ENCODE measurements at regions of chr16 and their contacts with region 1.

Region 1: DNA sequence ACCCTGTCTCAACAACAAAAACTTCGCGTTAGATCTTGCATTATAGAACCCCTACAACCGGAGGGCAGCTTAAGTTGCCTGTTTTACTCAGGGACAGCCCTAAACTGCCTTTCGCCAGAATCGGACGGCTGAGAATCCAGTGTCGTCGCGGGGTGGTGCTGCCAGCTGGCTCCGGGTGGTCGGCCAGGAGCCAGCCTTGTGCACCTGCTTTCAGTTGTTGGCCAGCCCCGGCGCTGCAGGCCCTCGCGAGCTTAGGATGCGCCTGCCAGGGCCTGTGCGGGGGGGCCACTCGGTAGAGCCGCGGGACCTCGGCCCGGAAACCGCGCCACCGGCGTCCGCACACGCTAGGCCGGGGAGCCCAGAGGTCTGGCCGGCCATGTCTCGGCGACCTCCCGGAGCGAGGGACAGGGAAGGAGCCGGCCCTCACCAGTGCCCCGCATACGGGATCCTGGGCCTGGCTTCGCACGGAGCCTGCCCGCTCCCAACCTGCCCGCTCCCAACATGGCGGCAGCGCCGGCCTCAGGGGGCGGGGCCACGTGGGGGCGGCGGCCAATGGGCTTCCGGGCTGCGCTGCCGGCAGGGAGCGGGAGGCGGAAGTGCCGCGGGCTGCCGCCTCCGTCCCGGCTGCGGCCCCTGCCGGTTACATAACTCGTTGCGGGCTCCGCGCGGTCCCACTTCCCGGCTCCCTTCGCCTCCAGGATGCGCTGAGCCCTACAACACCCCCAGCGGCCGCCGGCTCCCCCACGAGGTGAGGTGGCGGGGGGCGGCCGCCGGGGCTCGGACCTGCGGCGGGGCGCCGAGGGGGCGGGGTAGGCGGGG is 14.2 kb downstream of the NAA60 start:
- DNase-seq: peak; percentile 77 to 95 (median 90)

Region 2: DNA sequence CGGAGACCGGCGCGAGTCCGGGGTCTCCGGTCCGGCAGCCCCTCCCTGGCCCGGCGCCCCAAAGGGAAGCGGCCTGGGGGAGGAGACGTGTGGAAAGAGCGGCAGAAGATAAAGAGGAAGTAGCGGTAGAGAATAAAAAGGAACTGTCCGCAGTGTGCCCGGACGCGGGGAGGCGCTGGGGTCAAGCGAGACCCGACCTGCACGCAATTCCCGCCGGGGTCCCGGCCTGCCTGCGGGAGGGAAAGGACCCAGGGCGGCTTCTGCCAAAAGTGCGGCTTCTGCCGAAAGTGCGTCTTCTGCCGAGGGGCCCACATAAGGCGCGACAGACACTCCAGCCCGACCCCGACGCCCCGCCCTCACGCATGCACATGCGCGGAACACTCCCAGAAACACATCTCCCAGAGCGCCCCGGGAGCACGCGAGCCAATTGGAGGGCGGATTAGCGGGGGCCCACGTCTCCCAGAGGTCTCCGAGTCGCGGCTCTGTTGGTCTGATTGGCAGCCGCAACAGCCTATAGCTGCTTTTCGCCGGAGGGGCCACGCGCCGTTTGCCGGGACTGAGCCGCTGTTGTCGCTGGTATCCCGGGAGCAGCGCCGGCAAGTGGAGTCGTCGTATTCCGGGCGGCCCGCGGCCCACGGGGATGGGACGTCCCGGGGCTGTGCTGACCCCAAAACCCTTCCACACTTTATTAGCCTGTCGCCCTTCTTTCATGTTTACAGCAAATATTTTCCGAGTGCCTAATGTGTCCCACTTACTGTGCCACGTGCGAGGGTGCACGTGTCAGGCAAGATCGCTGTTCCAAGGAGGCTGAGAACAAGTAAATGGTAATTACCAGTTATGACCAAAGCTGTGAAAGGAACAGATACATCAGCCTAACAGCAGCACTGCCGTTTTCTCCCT is 193.3 kb before region 1 on chr16:
- intact Hi-C with region 1: loop called (anchors 10 kb)
- DNase-seq: peak; percentile 98 to 100 (median 99)

Region 3: GRCh38 chr16:3305109-3306068 is 152.3 kb before region 1 on chr16 and contains the starts of genes TIGD7 and ZNF75A:
- intact Hi-C with region 1: loop called (anchors 10 kb)
- DNase-seq: peak; percentile 87 to 99 (median 95)

Region 4: GRCh38 chr16:3383045-3383448 is 74.6 kb before region 1 on chr16:
- intact Hi-C with region 1: no loop called
- DNase-seq: no peak

Region 5: DNA sequence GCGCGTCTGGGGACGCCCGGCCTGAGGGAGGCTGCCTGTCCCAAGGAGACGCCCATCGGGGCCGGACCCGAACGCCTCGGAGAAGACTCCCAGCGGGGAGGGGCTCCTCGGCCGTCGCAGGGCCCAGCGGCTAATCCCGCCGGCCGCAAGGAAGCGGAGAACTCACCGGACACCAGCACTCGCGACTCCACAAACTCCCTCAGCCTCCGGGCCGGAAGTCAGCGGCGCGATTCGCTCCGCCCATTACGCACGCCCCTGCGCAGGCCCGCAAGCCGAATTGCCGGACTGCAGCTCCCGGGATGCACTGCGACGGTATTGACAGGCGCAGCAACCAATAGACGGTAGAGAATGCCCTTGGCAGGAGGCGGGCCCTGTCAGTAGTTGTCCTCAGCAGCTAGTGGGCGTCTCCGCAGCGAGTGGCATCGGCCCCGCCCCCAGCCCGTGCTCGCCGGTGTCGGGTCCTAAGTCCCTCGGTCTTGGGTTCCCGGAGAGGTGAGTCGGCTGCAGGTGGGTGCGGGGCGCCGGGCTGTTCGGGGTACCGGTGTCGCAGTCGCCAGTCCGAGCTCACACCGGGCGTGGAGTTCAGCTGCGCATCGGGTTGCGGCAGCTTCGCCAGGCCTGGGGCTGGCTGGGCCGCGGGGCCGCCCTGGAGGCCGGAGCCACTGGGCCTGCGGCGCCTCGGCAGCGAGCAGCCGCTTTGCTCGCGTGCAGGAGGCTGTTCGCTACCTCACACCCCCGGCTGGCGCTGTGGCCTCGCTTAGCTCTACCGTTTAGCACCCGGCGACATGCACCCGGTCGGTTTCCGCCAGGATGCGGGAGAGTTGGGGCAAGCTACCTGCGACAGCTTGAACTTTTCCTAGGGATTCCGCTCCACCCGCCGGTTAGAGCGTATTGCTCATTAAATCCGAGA is 56.6 kb before region 1 on chr16 and contains the starts of genes ZNF174 and ZSCAN32:
- intact Hi-C with region 1: loop called (anchors 2 kb)
- DNase-seq: peak; percentile 97 to 100 (median 99)

Region 6: DNA sequence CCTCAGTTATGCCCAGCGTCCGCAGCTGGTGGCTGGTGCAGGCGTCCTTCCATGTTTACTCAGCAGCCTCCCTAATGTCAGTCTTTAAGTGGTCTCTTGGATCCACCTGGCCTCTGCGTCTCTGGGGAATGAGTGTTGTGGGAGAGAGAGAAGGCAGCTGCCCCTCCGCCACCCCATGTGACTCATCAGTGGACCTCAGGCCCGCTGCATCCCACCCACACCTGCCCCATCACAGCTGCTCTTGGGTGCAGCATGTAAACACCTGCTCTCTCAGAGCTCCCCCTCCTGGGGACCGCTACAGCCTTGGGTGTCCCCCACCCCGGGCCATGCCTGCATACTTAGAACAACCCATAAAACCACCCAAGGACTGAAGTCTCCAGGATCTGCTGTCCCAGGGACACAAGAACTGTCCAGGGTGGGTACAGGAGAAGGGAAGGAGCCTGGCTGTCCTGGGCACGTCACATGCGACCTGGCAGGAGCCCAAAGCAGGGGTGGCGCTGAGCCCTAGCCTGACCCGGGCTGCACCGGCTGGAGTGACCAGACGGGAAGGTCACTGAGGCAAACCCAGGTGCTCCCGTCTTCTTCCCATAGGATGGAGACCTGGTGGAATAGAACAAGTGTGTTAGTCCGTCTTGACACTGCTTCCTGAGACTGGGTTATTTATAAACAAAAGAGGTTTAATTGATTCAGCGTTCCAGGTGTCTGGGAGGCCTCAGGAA is 33.4 kb after region 1 on chr16:
- intact Hi-C with region 1: no loop called
- DNase-seq: no peak

Region 7: GRCh38 chr16:3503523-3503922 is 45.9 kb after region 1 on chr16:
- intact Hi-C with region 1: loop called (anchors 5 kb)
- DNase-seq: peak in 2 of 42 donors; percentile 15 to 20

Measured in head of caudate nucleus (tissue), 42 donors.